ENCODE measurements at regions of chr2 and their contacts with region 1.

Region 1: DNA sequence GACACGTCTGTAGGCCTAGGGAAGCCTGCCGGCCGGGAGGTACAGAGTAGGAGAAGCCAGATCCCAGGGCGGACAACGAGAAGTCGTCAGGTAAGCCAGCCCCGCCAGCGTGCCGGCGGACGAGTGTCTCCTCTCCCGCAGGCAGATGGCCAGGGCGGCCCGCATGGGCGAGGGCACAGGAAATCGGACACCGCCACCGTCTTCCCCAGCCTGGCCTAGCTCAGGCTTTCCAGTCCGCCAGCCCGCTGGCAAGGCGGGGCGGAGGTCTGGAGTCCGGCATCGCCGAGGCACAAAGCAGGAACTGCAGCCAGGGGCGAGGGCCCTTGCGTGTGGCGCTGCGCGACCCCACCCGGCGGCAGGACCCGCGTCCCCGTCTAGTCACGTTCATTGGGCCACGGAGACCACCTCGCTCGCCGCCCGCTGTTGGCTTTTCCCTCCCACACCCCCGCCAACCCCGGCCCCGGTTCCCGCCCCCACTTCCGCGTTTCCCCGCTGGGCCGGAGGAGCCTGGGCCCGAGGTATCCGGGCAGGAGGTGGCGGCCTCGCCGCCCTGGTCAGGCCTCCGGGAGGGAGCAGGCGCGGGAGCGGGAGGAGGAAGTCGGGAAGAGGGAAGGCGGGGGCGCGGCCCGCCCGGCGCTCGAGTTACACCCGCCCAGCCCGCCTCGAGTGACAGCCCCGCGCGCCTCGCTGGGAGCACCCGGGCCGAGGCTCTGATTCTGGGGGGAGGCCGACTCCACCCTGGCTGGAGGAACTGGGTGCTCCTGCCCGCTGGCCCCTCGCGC is at the start of gene GPD2:
- DNase-seq: peak; percentile 81
- H3K4me3 ChIP-seq: peak within 1 kb of the TSS; percentile 43 to 71 (median 58)
- H3K27ac ChIP-seq: peak within 1 kb of the TSS; percentile 92
- H3K4me1 ChIP-seq: peaks cover 20% of the 10 kb centered on the region
- H3K27me3 ChIP-seq: no peaks in the 10 kb centered on the region
- CTCF ChIP-seq: no peak
- POLR2A ChIP-seq: peak; percentile 56
- total RNA-seq, gene GPD2: 29.3 and 37.0 TPM in 2 replicates

Region 2: DNA sequence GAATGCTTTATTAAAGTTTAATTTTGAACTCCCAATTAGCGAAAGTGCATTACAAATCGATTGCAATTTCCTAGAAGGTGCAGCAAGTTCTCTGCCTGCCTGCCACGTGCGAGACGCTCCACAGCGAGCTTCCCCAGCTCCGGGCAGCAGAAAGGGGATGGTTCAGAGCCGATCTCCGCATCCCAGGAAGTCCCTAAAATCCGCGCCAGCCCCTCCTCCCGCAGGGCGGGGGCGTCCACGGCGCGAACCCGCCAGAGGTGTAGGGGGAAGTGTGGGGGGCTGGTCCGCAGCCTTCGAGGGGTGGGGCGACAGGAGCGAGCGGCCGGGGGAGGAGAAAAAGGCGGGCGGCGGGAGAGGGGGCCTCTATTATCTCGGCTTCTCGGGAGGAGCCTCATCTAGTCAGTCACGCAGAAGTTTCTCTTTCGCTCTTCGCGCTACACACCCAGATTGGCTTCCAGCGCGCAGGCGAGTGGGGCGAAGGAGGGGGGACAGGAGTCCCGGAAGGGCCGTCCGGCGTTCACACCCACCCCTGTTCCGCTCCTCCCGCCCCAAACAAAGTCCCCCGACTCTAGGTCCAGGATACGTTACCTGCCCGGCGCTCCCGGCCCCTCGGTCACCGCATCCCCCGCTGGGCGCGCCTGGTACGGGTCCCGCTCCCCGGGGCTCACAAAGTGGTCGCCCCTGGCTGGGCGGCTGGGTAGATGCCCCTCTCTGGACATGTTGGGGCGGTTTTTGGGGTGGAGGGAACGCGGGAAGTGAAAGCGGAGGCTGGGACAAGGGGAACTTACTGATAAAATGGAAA is 94.3 kb before region 1 on chr2:
- CTCF ChIA-PET with region 1: no interaction called
- POLR2A ChIA-PET with region 1: interaction called, 3 read pairs
- dilution Hi-C with region 1: no loop called
- intact Hi-C with region 1: loop called (anchors 1 kb)
- DNase-seq: peak; percentile 83
- H3K4me3 ChIP-seq: peak overlapping the region; percentile 69 to 97 (median 87)
- H3K27ac ChIP-seq: peak overlapping the region; percentile 100
- H3K4me1 ChIP-seq: peaks cover 11% of the 10 kb centered on the region
- H3K27me3 ChIP-seq: no peaks in the 10 kb centered on the region
- CTCF ChIP-seq: no peak
- POLR2A ChIP-seq: peak; percentile 35

Region 3: DNA sequence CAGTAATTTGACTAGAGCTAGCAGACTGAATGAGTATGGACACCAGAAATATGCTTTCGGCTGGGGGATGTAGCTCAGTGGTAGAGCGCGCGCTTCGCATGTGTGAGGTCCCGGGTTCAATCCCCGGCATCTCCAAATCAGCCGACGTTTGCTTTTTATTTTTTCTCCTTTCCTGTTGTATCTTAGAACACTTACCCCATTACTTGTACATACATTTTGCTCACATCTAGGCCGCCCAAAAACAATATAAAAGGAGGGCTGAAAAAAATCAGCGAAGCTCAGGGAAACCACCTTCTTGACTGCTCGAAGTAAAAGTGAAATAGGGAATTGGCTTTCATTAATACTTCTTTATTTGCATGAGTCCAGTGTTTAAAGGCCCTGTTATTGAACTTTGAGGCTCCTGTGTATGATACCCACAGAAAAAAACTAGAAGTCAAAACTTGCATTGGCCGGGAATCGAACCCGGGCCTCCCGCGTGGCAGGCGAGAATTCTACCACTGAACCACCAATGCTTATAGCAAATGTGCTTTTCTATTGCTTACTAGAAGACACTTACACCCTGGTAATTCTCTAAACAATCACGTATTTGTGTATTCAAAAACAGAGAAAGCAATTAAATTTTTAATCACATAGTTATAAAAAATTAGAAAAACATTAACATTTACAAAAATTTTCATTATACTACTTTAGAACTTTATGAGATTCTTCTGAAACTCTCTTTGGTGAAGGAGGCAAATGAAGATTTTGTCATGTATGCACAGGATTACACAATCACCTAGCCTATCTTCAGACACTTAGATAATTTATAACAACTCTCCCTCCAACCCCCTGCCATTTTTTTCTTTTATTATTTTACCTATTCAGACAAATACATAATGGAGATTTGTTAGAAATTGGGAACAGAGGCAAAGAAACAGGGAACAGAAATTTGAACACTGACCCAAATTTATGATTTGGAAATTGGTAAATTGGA is 34.9 kb before region 1 on chr2:
- CTCF ChIA-PET with region 1: no interaction called
- POLR2A ChIA-PET with region 1: no interaction called
- dilution Hi-C with region 1: no loop called
- intact Hi-C with region 1: loop called (anchors 1 kb)
- DNase-seq: peak; percentile 91
- H3K4me3 ChIP-seq: peak overlapping the region; percentile 48 to 71 (median 49)
- H3K27ac ChIP-seq: peak overlapping the region; percentile 41
- H3K4me1 ChIP-seq: peaks cover 5% of the 10 kb centered on the region
- H3K27me3 ChIP-seq: peaks cover 0 to 5% of the 10 kb centered on the region in 2 experiments
- CTCF ChIP-seq: no peak
- POLR2A ChIP-seq: no peak

Region 4: GRCh38 chr2:156466739-156467405 is 31.0 kb after region 1 on chr2:
- CTCF ChIA-PET with region 1: interaction called, 4 read pairs
- POLR2A ChIA-PET with region 1: no interaction called
- dilution Hi-C with region 1: no loop called
- intact Hi-C with region 1: loop called (anchors 1 kb)
- DNase-seq: peak; percentile 60
- H3K4me3 ChIP-seq: peak overlapping the region in 1 of 3 experiments; percentile 16
- H3K27ac ChIP-seq: no peak overlapping the region
- H3K4me1 ChIP-seq: peaks cover 27% of the 10 kb centered on the region
- H3K27me3 ChIP-seq: no peaks in the 10 kb centered on the region
- CTCF ChIP-seq: no peak
- POLR2A ChIP-seq: no peak

Measured in endothelial cell of umbilical vein (primary cell).